ENCODE measurements at regions of chr12 and their contacts with region 1.

Region 1: GRCh38 chr12:4763549-4763948 is 43.3 kb downstream of the GALNT8 start:
- H3K4me3 Mint-ChIP-seq: no peak overlapping the region
- H3K27ac Mint-ChIP-seq: no peak overlapping the region
- H3K4me1 Mint-ChIP-seq: no peaks in the 10 kb centered on the region
- H3K27me3 Mint-ChIP-seq: peaks cover 10% of the 10 kb centered on the region

Region 2: DNA sequence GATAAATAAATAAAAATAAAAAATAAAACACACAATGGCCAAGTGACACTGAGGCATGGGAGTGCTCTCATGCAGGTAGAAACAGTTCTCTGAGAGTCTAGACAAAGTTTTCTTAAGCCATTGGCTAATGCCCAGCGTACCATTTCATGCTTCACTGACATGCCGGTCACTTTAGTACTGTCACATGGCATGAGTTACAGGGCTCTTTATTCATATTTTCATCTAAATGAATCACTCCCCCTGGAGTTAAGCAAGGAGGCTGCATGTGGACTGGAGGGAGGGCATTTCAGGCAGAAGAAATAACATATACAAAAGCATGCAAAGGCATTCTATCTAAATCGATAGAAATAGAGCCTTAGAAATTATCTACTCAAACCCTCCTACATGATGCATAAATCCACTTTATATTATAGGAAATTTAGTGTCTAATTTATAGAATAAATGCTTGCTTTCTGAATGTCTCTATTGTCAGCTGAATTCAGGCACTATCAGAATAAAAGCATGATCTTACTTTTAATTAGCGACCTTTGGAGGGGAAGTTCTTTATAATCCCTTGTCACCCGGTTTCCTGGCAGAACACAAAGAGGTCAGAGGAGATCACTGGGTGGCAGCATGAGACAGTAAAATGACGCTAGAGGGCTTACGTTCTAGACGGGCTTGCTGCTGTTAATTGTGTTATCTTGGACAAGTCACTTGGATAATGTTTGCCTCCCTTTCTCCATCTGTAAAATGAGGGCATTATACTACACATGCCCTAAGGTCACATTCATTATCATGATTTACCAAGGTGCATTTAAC is 184.0 kb before region 1 on chr12:
- intact Hi-C with region 1: loop called (anchors 1 kb)
- H3K4me3 Mint-ChIP-seq: no peak overlapping the region
- H3K27ac Mint-ChIP-seq: peak overlapping the region; percentile 25
- H3K4me1 Mint-ChIP-seq: no peaks in the 10 kb centered on the region
- H3K27me3 Mint-ChIP-seq: peaks cover 11% of the 10 kb centered on the region

Measured in dendritic cell treated with granulocyte-macrophage colony-stimulating factor and Interleukin-4, amounts not matched to agents 40 ng/mL and 50 ng/mL, for 4 days (primary cell).